BJ (cell line): ENCODE measurements at regions of chr12 and their contacts with region 1.

Region 1: DNA sequence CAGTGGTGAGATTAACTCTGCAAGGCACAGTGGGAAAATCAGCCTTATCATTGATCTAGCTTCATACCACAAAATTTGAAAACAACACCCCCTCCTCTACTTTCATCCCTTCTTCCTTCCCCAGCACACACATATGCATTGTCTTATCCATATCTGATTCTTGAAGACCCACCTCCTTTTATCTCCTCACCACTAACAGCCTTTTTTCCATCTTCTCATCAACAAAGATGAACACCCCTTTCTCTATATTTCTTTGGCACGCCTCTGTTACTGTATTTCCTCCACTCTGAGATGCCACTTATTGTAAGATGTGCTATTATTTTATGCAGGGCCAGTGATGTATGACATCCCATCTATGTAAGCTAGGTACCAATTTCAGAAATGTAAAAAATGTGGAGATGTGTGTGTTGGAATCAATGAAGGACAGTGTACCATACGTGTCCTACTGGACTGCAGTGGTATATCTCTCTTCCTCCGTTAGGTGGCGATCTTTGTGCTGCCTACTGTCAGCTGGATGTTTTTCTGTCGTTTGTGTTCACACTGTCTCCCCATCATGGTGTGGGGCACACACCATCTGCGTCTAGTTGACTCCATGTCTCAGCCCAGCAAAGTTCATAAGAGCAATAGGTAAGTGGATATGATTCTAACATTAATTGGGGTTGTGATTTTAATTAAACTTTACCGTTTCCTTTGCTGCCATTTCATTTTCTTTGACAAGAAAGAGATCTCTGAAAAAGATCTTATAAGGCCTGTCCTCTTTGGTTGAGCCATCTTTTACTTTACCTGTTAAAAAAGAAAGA is 24.0 kb downstream of the CCDC38 start:
- DNase-seq: no peak
- H3K4me3 ChIP-seq: no peak overlapping the region
- H3K27me3 ChIP-seq: 0 out of 2 replicates have a peak, but pooled peaks cover 2% of the 10 kb centered on the region
- CTCF ChIP-seq: peak; percentile 86

Region 2: GRCh38 chr12:95942524-95943329 is 24.3 kb after region 1 on chr12 and contains the start of gene CCDC38:
- CTCF ChIA-PET with region 1: interaction called, 14 read pairs
- POLR2A ChIA-PET with region 1: no interaction called
- DNase-seq: no peak
- H3K4me3 ChIP-seq: peak within 1 kb of the TSS; percentile 53
- H3K27me3 ChIP-seq: no peaks in the 10 kb centered on the region
- CTCF ChIP-seq: no peak
- polyA plus RNA-seq, gene CCDC38: not detected in 2 replicates

Region 3: GRCh38 chr12:95959107-95959506 is 40.7 kb after region 1 on chr12:
- CTCF ChIA-PET with region 1: interaction called, 13 read pairs
- POLR2A ChIA-PET with region 1: no interaction called
- DNase-seq: no peak
- H3K4me3 ChIP-seq: no peak overlapping the region
- H3K27me3 ChIP-seq: no peaks in the 10 kb centered on the region
- CTCF ChIP-seq: 0 out of 2 replicates have a peak, but pooled peaks have one; percentile 20